GM10248 (cell line): ENCODE measurements at regions of chr10 and their contacts with region 1.

Region 1: DNA sequence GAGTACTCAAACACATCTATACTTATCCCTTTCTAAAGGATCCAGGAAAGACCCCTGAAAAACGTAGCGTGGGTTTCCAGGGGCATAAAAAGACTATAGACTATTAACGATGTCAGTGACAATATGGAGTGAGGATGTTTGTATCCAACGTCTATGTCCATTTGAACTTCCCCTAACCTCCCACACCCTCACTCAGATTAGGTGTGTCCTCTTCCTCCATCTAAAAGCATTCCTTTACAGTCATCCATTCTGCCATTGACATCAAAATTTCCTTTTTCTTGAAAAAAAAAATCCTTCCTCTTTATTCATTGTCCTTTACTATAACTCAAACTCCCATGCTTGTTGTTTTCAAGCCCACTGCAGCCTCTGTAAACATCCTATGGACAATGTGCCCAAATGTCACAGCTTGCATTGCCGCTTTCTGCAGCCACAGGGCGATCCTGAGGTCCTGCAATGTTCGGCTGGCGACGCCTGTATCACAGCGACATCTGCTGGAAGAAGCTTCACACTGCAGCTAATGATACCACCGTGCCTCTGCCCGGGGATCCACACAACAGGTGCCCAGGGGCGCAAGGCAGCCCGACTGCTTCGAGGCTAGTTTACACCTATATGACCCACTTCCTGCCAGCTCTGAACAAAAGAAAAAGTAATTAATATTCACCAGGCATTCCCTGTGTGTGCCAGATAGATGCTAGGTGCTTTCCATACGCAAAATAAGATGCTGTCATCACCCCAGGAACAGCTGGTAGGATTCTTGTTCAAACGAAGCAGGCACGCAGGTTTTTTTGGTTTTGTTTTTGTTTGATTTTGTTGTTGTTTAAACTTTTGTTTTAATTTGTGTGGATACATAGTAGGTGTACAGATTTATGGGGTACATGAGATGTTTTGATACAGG is 267.9 kb upstream of the GHITM start:
- DNase-seq: peak; percentile 71
- CTCF ChIP-seq: peak; percentile 98

Region 2: DNA sequence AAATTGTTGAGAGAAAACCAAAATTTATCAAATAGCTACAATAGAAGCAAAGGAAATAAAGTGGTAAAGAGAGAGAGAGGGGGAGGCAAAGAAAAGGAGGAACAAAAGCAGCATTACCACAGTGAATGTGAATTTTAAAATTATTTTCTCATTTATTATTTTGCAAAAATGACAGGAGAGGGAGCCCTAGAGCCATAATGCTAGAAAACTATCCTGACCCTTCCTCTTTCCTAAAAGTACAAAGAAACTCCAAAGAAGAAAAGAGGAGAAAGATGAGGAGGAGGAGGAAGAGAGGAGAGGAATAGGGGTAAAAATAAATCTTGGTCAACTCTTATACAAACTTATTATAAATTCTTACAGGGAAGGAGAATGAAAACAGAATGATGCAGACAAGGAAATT is 1074.9 kb before region 1 on chr10:
- CTCF ChIA-PET with region 1: interaction called, 36 read pairs
- POLR2A ChIA-PET with region 1: no interaction called
- DNase-seq: no peak
- CTCF ChIP-seq: no peak

Region 3: GRCh38 chr10:82811621-82812020 is 1059.8 kb before region 1 on chr10:
- CTCF ChIA-PET with region 1: interaction called, 11 read pairs
- POLR2A ChIA-PET with region 1: no interaction called
- DNase-seq: peak; percentile 12
- CTCF ChIP-seq: peak; percentile 13

Region 4: GRCh38 chr10:83425313-83425712 is 446.1 kb before region 1 on chr10:
- CTCF ChIA-PET with region 1: interaction called, 12 read pairs
- POLR2A ChIA-PET with region 1: no interaction called
- DNase-seq: no peak
- CTCF ChIP-seq: no peak

Region 5: DNA sequence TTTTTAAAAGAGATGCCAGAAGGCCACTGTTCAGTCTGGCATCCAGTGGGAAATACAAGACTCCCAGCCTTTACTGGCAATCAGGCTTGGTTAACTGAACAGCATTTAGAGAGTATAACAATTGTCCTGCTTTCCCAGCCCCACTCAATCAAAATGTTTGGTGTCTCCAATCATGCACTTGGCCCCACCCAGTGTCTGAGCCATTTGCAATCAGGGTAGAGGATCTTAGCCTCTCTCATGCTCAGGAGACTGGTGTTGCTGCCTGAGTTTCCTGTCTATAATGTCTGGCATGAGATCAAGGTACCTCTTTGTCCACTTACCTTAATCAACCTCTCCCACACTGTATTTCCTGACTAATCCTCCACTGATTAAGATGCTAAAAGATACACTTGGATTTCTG is 22.3 kb before region 1 on chr10:
- CTCF ChIA-PET with region 1: interaction called, 19 read pairs
- POLR2A ChIA-PET with region 1: no interaction called
- DNase-seq: no peak
- CTCF ChIP-seq: no peak

Region 6: DNA sequence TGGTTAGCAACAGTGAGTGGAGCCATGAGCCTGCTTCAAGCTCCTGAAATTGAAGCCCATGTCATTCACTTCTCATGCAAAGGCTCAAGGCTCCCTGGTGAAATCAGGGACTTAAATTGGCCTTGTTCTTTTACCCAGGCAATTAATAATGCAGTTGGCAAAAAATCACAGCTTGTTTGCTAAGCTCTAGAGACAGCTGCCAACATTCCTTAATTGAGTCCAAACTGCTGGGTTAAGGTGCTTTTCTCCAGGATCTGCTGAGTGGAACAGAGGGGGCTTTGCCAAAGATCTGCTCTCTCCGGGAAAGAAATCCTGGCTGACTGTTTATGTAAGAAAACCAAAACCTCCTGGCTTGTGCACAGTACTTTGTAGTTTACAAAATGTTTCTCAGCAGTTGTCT is 10.2 kb after region 1 on chr10:
- CTCF ChIA-PET with region 1: interaction called, 23 read pairs
- POLR2A ChIA-PET with region 1: no interaction called
- DNase-seq: no peak
- CTCF ChIP-seq: no peak

Region 7: GRCh38 chr10:83886871-83887270 is 15.4 kb after region 1 on chr10:
- CTCF ChIA-PET with region 1: interaction called, 23 read pairs
- POLR2A ChIA-PET with region 1: no interaction called
- DNase-seq: no peak
- CTCF ChIP-seq: no peak

Region 8: DNA sequence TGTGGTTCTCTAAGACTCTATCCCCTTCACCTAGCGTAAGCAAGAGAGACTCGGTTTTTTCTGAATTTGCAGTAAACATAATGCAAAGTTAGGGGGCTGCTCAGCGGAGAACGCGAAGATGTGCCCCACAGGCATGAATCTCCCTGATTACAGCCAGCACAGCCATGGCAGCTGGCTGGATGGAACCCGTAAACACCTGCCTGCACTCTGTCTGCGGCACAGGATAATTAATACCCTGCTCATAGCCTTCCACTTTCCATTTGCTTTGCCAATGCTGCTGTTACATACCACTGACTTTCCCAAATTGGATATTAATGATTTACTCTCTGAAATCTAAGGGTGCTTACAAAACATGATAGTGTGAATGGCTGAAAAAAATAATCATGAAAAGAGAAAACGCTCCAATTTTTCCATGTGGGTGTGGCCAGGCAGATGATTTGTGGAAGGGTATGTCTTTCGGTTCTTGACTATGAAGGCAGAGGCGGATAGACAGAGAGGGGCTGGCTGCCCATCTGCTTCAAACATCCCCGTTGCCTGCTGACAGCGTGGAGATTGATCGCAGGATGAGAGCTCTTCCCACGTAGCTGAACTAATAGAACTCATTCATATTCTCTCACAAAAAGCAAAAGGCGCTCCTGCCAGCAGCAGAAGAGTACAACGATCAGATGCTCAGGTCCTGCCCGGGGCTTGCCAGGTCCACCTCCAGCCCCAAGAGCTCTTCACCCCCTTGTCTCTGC is 74.7 kb after region 1 on chr10:
- CTCF ChIA-PET with region 1: no interaction called
- POLR2A ChIA-PET with region 1: no interaction called
- DNase-seq: no peak
- CTCF ChIP-seq: no peak